Caco-2 (cell line): ENCODE measurements at regions of chr5 and their contacts with region 1.

Region 1: GRCh38 chr5:180831139-180832048 is 28.8 kb upstream of the MGAT1 start:
- DNase-seq: peak; percentile 83 to 89
- H3K4me3 ChIP-seq: peak overlapping the region; percentile 76
- H3K4me3 Mint-ChIP-seq: peak overlapping the region; percentile 97
- H3K27ac Mint-ChIP-seq: peak overlapping the region; percentile 98
- H3K4me1 ChIP-seq: peaks cover 14% of the 10 kb centered on the region
- H3K4me1 Mint-ChIP-seq: peaks cover 17% of the 10 kb centered on the region
- H3K27me3 ChIP-seq: no peaks in the 10 kb centered on the region
- H3K27me3 Mint-ChIP-seq: no peaks in the 10 kb centered on the region
- CTCF ChIP-seq: peak in 1 of 2 experiments; percentile 8

Region 2: DNA sequence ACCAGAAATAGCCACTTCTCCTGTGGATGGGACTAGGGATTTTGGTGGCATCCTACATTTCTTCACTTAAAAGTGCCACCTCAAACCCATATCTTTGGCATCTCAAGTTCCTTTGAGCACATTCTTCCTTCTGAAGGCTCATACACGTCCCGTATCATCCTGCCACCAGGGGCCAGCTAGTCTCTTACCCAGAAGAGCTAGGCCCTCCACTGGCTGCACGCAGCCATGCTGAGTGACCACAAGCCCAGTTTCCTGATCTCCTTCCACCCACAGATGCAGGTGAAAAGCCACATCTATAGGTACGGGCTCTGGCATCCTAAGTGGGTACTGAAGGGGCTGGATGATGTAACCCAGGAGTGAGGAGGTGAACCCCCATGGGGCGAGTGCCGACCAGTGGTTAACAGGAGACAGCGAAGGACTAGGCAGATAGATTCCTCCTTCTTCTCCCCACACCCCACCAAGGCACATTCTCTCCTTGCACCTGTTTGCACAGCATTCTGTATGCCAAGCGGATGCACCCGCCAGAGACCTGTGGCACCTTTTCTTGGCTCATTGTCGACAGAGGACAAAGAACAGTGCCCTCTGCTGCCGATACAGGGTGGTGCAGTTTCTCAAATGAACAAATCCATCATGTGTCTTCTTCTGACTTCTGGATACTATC is 225.7 kb before region 1 on chr5:
- CTCF ChIA-PET with region 1: no interaction called
- POLR2A ChIA-PET with region 1: no interaction called
- intact Hi-C with region 1: no loop called
- DNase-seq: peak in 1 of 2 experiments; percentile 49
- H3K4me3 ChIP-seq: no peak overlapping the region
- H3K4me3 Mint-ChIP-seq: no peak overlapping the region
- H3K27ac Mint-ChIP-seq: no peak overlapping the region
- H3K4me1 ChIP-seq: peaks cover 8% of the 10 kb centered on the region; the same call in 1 of the 2 replicates
- H3K4me1 Mint-ChIP-seq: no peaks in the 10 kb centered on the region
- H3K27me3 ChIP-seq: no peaks in the 10 kb centered on the region
- H3K27me3 Mint-ChIP-seq: no peaks in the 10 kb centered on the region
- CTCF ChIP-seq: peak; percentile 69 to 74

Region 3: DNA sequence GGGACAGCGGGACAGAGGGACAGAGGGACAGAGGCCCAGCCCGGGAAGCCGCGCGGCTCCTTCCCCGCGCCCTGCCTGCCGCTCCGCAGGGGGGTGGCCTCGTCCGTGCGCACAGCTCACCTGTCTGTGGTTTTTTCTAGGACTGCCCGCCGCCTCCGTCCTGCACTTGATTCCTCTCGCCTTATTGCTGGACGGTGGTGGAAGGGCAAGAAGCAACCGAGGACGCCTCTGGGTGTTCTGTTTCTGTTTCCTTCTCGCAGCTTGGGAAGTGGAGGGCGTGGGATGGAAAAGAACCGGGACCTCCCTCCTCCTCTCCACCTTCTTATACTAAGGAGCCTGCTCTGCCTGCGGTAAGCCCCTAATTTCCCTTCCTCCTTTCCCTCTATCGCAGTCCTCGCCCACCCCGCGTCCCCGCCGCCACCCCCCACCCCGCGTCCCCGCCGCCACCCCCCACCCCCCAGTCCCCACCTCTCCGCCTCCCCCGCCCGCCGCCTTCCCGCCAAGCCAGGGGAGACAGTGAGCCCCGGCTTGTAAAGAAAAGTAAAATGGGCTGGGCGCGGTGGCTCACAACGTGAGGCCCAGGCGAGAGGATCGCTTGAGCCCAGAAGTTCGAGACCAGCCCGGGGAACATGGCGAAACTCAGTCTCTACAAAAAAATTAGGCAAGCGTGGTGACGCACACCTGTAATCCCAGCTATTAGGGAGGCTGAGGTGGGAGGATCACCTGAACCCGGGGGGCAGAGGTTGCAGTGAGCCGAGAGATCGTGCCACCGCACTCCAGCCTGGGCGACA is 172.4 kb before region 1 on chr5:
- CTCF ChIA-PET with region 1: no interaction called
- POLR2A ChIA-PET with region 1: no interaction called
- intact Hi-C with region 1: no loop called
- DNase-seq: no peak
- H3K4me3 ChIP-seq: no peak overlapping the region
- H3K4me3 Mint-ChIP-seq: no peak overlapping the region
- H3K27ac Mint-ChIP-seq: no peak overlapping the region
- H3K4me1 ChIP-seq: no peaks in the 10 kb centered on the region
- H3K4me1 Mint-ChIP-seq: no peaks in the 10 kb centered on the region
- H3K27me3 ChIP-seq: no peaks in the 10 kb centered on the region
- H3K27me3 Mint-ChIP-seq: peaks cover 21% of the 10 kb centered on the region
- CTCF ChIP-seq: no peak

Region 4: GRCh38 chr5:180791611-180792287 is 39.6 kb before region 1 on chr5:
- CTCF ChIA-PET with region 1: no interaction called
- POLR2A ChIA-PET with region 1: no interaction called
- intact Hi-C with region 1: no loop called
- DNase-seq: no peak
- H3K4me3 ChIP-seq: no peak overlapping the region
- H3K4me3 Mint-ChIP-seq: no peak overlapping the region
- H3K27ac Mint-ChIP-seq: no peak overlapping the region
- H3K4me1 ChIP-seq: peaks cover 3% of the 10 kb centered on the region
- H3K4me1 Mint-ChIP-seq: peaks cover 5% of the 10 kb centered on the region
- H3K27me3 ChIP-seq: no peaks in the 10 kb centered on the region
- H3K27me3 Mint-ChIP-seq: no peaks in the 10 kb centered on the region
- CTCF ChIP-seq: no peak

Region 5: GRCh38 chr5:180802325-180803180 is 28.8 kb before region 1 on chr5 and contains the start of gene MGAT1:
- CTCF ChIA-PET with region 1: no interaction called
- POLR2A ChIA-PET with region 1: interaction called, 11 read pairs
- intact Hi-C with region 1: no loop called
- DNase-seq: peak; percentile 83 to 89
- H3K4me3 ChIP-seq: peak within 1 kb of the TSS; percentile 88
- H3K4me3 Mint-ChIP-seq: peak within 1 kb of the TSS; percentile 82
- H3K27ac Mint-ChIP-seq: peak within 1 kb of the TSS; percentile 89
- H3K4me1 ChIP-seq: peaks cover 43% of the 10 kb centered on the region
- H3K4me1 Mint-ChIP-seq: peaks cover 45% of the 10 kb centered on the region
- H3K27me3 ChIP-seq: no peaks in the 10 kb centered on the region
- H3K27me3 Mint-ChIP-seq: no peaks in the 10 kb centered on the region
- CTCF ChIP-seq: no peak
- total RNA-seq, gene MGAT1: 80.1 and 82.5 TPM in 2 replicates

Region 6: GRCh38 chr5:180920710-180921109 is 89.3 kb after region 1 on chr5:
- CTCF ChIA-PET with region 1: no interaction called
- POLR2A ChIA-PET with region 1: no interaction called
- intact Hi-C with region 1: no loop called
- DNase-seq: no peak
- H3K4me3 ChIP-seq: no peak overlapping the region
- H3K4me3 Mint-ChIP-seq: no peak overlapping the region
- H3K27ac Mint-ChIP-seq: no peak overlapping the region
- H3K4me1 ChIP-seq: peaks cover 16% of the 10 kb centered on the region; the same call in 1 of the 2 replicates
- H3K4me1 Mint-ChIP-seq: peaks cover 18% of the 10 kb centered on the region
- H3K27me3 ChIP-seq: no peaks in the 10 kb centered on the region
- H3K27me3 Mint-ChIP-seq: no peaks in the 10 kb centered on the region
- CTCF ChIP-seq: no peak